Naive thymus-derived CD8-positive, alpha-beta T cell (primary cell): ENCODE measurements at regions of chr19 and their contacts with region 1.

Region 1: GRCh38 chr19:18152444-18152816 is 533 bp upstream of the PIK3R2 start:
- DNase-seq: peak; percentile 95 to 100 (median 97)
- ATAC-seq: peak; percentile 70 to 72
- H3K4me3 Mint-ChIP-seq: peak overlapping the region; percentile 83 to 97 (median 93)
- H3K27ac Mint-ChIP-seq: peak overlapping the region; percentile 93 to 99 (median 96)
- H3K4me1 Mint-ChIP-seq: peaks cover 15 to 31% (median 26%) of the 10 kb centered on the region in 4 donors
- H3K27me3 Mint-ChIP-seq: no peaks in the 10 kb centered on the region

Region 2: GRCh38 chr19:18117692-18118378 is 34.6 kb before region 1 on chr19:
- POLR2A ChIA-PET with region 1: interaction called, 39 read pairs
- DNase-seq: peak; percentile 92 to 98 (median 96)
- ATAC-seq: peak; percentile 69 to 73
- H3K4me3 Mint-ChIP-seq: peak overlapping the region; percentile 79 to 95 (median 90)
- H3K27ac Mint-ChIP-seq: peak overlapping the region; percentile 95 to 100 (median 98)
- H3K4me1 Mint-ChIP-seq: peaks cover 18 to 48% (median 40%) of the 10 kb centered on the region in 4 donors
- H3K27me3 Mint-ChIP-seq: no peaks in the 10 kb centered on the region

Region 3: DNA sequence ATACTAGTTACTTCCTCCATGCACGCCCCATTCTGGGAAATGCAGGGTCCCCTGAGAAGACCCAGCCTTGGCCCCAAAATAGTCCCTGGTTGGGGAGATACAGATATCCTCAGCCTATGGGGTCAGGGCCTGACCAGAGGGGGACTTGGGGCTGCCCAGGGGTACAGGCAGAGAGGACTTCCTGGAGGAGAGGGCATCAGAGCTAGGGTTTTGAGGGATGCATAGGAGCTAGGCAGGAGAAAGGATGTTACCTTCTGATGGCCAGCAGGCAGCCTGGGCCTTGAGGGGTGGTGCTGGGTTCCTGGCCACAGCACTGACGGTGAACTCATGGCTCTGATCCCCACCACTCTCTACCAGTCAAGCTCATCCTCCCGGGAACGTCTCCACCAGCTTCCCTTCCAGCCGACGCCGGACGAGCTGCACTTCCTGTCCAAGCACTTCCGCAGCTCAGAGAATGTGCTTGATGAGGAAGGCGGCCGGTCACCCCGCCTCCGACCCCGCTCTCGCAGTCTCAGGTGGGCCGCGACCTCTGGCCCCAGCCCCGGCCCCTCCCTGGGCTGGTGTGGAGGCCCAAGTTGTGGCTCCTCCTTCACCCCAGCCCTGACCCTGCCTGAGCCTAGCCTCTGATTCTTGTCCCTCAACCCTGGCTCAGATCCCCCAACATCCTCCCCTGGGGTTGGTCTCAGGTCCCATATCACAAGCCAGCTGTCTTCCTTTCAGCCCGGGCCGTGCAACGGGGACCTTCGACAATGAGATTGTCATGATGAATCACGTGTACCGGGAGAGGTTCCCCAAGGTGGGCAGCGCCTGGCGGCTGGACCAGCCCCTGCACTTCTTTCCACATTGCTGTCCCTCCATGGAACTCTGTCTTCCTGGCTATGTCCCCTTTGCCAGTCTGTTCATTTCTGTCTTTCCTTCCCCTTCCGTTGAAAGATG is 29.3 kb before region 1 on chr19:
- POLR2A ChIA-PET with region 1: interaction called, 39 read pairs
- DNase-seq: no peak
- ATAC-seq: no peak
- H3K4me3 Mint-ChIP-seq: no peak overlapping the region
- H3K27ac Mint-ChIP-seq: peak overlapping the region; percentile 40 to 89 (median 68)
- H3K4me1 Mint-ChIP-seq: peaks cover 11 to 36% (median 21%) of the 10 kb centered on the region in 4 donors
- H3K27me3 Mint-ChIP-seq: no peaks in the 10 kb centered on the region

Region 4: GRCh38 chr19:18179957-18180356 is 27.5 kb after region 1 on chr19:
- POLR2A ChIA-PET with region 1: no interaction called
- DNase-seq: no peak
- ATAC-seq: no peak
- H3K4me3 Mint-ChIP-seq: no peak overlapping the region
- H3K27ac Mint-ChIP-seq: no peak overlapping the region
- H3K4me1 Mint-ChIP-seq: peaks cover 0 to 26% (median 3%) of the 10 kb centered on the region in 4 donors
- H3K27me3 Mint-ChIP-seq: peaks cover 0 to 3% (median 0%) of the 10 kb centered on the region in 5 donors